ENCODE measurements at regions of chr5 and their contacts with region 1.

Region 1: DNA sequence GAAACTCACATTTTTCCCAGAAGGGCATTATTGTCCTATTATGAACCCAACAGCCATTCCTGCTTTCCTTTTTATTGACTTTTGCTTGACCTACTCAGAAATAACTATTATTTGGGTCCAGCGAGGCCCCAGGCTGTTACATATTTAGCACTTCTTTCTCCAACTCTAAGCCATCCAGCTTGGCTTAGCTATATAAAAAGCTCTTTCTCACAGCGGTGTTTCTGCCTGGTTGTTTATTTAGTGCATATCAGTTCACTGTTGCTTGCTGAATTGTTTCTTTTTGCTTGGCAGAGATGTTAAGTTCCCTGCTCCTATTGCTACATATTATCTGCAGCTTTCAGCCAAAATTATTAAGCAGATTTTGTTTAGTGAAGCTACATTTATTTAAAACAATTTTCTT is 1156.8 kb upstream of the SEMA6A start:
- DNase-seq: no peak
- ATAC-seq: no peak
- H3K4me3 ChIP-seq: no peak overlapping the region
- H3K27ac ChIP-seq: no peak overlapping the region
- H3K4me1 ChIP-seq: peaks cover 0 to 6% (median 0%) of the 10 kb centered on the region in 3 donors
- H3K27me3 ChIP-seq: no peaks in the 10 kb centered on the region
- CTCF ChIP-seq: no peak

Region 2: DNA sequence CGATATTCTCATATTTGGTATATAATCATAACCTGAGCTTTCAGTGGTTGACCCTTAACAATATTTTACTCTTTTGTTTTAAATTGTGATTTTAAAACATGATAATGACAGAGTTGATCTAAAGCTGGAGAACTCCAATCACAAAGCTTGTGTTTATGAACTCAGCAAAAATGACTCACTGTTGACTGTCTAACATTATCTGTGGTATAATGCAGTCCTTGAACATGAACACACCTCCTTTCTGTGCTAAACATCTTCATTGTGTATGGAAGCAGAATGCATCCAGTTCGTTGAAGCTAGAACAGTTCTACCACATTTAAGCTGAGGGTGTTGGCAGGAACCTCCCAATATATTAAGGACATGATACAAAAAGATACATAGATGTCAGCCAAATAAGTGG is 126.6 kb before region 1 on chr5:
- intact Hi-C with region 1: loop called in 1 of 3 experiments (anchors 10 kb)
- DNase-seq: no peak
- ATAC-seq: no peak
- H3K4me3 ChIP-seq: no peak overlapping the region
- H3K27ac ChIP-seq: no peak overlapping the region
- H3K4me1 ChIP-seq: no peaks in the 10 kb centered on the region
- H3K27me3 ChIP-seq: no peaks in the 10 kb centered on the region
- CTCF ChIP-seq: no peak

Measured in pancreas (tissue), 10 donors.